Activated CD4-positive, alpha-beta T cell treated with anti-CD3 and anti-CD28 coated beads for 36 hours (primary cell): ENCODE measurements at regions of chr16 and their contacts with region 1.

Region 1: GRCh38 chr16:88569985-88570690 is at the start of gene ZC3H18:
- DNase-seq: peak; percentile 99
- ATAC-seq: peak; percentile 83
- H3K4me3 Mint-ChIP-seq: peak within 1 kb of the TSS; percentile 88
- H3K27ac Mint-ChIP-seq: peak within 1 kb of the TSS; percentile 79
- H3K4me1 Mint-ChIP-seq: peaks cover 44% of the 10 kb centered on the region
- H3K27me3 Mint-ChIP-seq: no peaks in the 10 kb centered on the region
- total RNA-seq, gene ZC3H18: 70.0 to 76.4 TPM

Region 2: GRCh38 chr16:87765776-87766484 is 804.2 kb before region 1 on chr16 and contains the start of gene KLHDC4:
- CTCF ChIA-PET with region 1: no interaction called
- POLR2A ChIA-PET with region 1: no interaction called
- intact Hi-C with region 1: loop called in 1 of 2 experiments (anchors 1 kb)
- DNase-seq: peak; percentile 94
- ATAC-seq: peak; percentile 88
- H3K4me3 Mint-ChIP-seq: peak within 1 kb of the TSS; percentile 100
- H3K27ac Mint-ChIP-seq: peak within 1 kb of the TSS; percentile 99
- H3K4me1 Mint-ChIP-seq: peaks cover 35% of the 10 kb centered on the region
- H3K27me3 Mint-ChIP-seq: no peaks in the 10 kb centered on the region
- total RNA-seq, gene KLHDC4: 67.0 to 77.3 TPM

Region 3: DNA sequence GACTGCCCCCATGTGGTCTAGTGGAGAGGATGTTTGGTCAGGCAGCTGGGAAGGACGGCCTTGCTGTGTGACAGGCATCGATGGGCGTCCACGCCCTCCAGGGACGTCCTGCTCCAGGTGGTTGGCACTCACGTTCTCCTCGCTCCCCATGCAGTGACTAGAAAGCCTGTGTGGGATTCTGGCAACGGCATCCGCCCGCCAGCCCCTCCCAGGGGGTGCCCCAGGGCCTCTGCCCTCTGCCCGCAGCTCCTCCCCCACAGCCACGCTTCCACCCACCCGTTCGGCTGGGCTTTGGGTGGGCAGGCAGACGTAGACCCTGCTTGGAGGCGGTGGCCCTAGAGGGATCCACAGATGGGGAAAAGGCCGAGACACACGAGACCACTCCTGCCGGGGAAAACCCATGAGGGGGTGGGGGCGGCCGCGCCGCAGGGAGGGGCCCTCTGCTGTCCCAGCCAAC is 63.6 kb after region 1 on chr16:
- CTCF ChIA-PET with region 1: no interaction called
- POLR2A ChIA-PET with region 1: no interaction called
- intact Hi-C with region 1: loop called in 1 of 2 experiments (anchors 2 kb)
- DNase-seq: peak; percentile 81
- ATAC-seq: peak; percentile 53
- H3K4me3 Mint-ChIP-seq: peak overlapping the region; percentile 56
- H3K27ac Mint-ChIP-seq: no peak overlapping the region
- H3K4me1 Mint-ChIP-seq: peaks cover 38% of the 10 kb centered on the region
- H3K27me3 Mint-ChIP-seq: peaks cover 16% of the 10 kb centered on the region

Region 4: DNA sequence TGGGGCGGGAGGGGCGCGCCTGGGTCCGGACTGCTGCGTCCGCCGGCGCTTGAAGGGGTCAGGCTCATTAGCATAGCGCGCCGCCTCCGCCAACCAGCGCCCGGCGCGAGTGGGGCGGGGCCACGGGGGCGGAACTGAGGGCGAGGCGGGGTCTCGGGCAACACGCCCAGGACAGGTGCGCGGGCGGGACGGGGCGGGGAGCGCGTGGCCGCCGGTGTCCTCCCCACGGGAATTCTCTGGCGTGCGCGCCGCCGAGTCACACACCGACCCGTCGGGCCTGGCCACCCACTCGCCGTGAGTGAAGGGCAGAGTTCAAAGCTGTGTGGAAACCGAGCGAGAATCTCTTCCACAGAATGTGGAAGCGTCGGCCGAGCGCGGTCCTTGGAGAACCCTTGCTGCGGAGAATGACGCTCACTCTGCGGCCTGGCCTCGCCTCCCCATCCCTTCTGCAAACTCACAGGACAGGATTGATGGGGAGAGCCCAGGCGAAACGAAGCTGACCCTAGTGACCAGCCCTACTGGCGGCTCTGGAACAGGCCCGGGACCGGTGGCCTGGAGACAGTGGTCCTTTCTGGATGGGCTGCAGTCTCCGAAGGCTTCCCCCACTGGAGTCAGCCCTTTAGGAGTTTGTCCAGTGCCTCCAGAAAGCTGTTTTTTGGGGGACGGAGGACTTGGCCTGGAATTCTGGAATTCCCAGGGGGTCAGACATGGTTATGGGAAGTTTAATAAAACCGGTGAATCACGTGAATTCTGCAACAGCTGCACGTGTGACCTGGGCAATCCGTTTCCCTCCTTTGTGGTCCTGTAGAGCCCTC is 116.5 kb after region 1 on chr16 and contains the start of gene SNAI3:
- CTCF ChIA-PET with region 1: no interaction called
- POLR2A ChIA-PET with region 1: no interaction called
- intact Hi-C with region 1: loop called in 1 of 2 experiments (anchors 1 kb)
- DNase-seq: peak; percentile 91
- ATAC-seq: peak; percentile 69
- H3K4me3 Mint-ChIP-seq: peak within 1 kb of the TSS; percentile 70
- H3K27ac Mint-ChIP-seq: peak within 1 kb of the TSS; percentile 37
- H3K4me1 Mint-ChIP-seq: peaks cover 42% of the 10 kb centered on the region
- H3K27me3 Mint-ChIP-seq: no peaks in the 10 kb centered on the region
- total RNA-seq, gene SNAI3: 3.6 to 4.1 TPM

Region 5: DNA sequence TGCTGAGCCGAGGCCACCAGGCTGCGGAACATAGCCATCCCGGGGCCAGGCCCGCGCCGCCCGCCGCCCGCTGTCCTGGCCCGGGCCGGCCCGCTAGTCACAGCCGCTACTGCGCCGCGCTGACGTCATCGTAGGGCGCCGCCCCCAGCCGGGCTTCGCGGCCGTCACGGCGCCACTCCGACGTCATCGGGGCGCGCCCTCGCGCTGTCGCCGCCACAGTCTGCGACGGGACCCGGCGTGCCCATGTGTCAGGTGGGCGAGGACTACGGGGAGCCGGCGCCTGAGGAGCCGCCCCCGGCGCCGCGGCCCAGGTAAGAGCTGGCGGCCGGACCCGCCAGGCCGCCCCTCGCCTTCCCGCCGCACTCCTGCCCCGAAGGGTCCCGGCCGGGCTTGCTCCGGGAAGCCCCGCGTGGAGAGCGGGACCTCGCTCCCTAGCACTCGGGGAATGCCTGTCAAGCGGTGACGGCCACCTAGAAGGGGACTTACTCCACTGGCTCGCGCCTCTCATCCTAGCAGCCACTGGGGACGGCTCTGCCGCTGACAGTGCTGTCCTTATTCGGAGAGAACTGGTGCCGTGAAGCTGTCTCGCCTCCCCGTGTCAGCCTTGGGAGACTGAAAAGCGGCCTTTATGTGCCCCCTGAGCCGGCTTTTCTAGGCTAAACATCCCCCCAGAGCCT is 136.3 kb after region 1 on chr16 and contains the starts of genes CTU2 and RNF166:
- CTCF ChIA-PET with region 1: no interaction called
- POLR2A ChIA-PET with region 1: interaction called, 3 read pairs
- intact Hi-C with region 1: loop called (anchors 1 kb)
- DNase-seq: peak; percentile 96
- ATAC-seq: peak; percentile 59
- H3K4me3 Mint-ChIP-seq: peak within 1 kb of the TSS; percentile 92
- H3K27ac Mint-ChIP-seq: peak within 1 kb of the TSS; percentile 92
- H3K4me1 Mint-ChIP-seq: peaks cover 43% of the 10 kb centered on the region
- H3K27me3 Mint-ChIP-seq: no peaks in the 10 kb centered on the region
- total RNA-seq, gene CTU2: 29.6 to 36.2 TPM
- total RNA-seq, gene RNF166: 44.0 to 49.7 TPM